ENCODE measurements at regions of chr10 and their contacts with region 1.

Region 1: GRCh38 chr10:62038609-62039190 is 137.2 kb downstream of the ARID5B start:
- H3K4me3 ChIP-seq: no peak overlapping the region
- H3K27ac ChIP-seq: no peak overlapping the region; the same call in 1 of the 2 replicates
- H3K4me1 ChIP-seq: peaks cover 19% of the 10 kb centered on the region
- CTCF ChIP-seq: peak; percentile 56; the same call in 1 of the 2 replicates

Region 2: DNA sequence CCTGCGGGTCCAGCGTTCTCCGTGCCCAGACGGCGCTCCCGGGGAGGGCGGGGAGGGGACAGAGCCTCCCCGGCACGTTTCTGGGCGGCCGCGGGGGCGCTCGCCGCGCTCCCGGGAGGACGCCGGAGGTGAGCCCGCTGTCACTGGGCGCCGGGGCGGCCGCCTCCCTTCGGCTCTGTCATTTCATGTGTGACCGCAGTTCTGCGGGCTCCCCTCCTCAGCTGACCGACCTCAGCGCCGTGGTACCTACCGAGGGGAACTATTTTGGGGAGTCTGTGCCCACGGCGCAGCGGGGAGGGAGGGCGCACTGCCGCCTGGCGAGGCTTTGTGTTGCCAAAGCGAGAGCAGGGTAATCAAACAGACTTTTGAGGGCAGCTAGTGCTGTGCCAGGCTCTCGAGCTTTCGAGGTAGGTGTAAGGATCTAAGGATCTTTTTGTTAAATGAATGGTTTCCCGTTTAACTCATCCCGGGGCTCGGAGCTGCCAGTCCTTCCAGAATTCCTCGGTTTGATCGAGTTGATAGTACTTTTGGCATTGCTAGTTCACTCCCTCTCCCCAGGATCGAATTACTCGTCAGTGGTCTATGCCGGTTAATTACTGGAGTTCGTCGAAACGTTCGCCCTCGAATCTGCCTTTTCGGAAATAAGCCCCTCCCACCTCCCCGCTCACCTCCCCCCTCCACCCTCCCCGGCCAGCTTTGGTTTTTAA is 135.3 kb before region 1 on chr10:
- CTCF ChIA-PET with region 1: interaction called, 35 read pairs
- POLR2A ChIA-PET with region 1: no interaction called
- H3K4me3 ChIP-seq: peak overlapping the region; percentile 53
- H3K27ac ChIP-seq: peak overlapping the region; percentile 99
- H3K4me1 ChIP-seq: peaks cover 6% of the 10 kb centered on the region; the same call in 1 of the 2 replicates
- CTCF ChIP-seq: peak; percentile 91

Region 3: DNA sequence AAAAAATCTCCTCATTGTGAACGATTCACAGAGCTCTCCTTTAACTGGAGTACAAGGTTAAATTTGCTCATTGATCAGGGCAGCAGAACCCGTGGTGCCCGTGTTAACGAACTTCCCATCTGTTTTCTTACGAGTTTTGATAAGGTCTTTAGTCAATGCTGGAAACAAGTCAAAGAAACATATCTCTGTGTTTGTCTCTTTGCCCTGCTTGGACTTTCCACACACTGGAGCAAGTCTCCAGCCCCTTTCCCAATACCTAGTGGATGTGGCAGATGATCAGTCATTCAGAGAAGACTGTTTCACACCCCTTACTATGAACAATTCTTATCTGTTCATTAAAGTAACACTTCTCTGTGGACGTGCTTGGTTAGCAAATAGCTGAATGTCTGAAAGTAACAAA is 15.9 kb before region 1 on chr10:
- CTCF ChIA-PET with region 1: interaction called, 19 read pairs
- POLR2A ChIA-PET with region 1: no interaction called
- H3K4me3 ChIP-seq: no peak overlapping the region
- H3K27ac ChIP-seq: no peak overlapping the region
- H3K4me1 ChIP-seq: peaks cover 34% of the 10 kb centered on the region
- CTCF ChIP-seq: no peak

Region 4: GRCh38 chr10:62050893-62051433 is 12.3 kb after region 1 on chr10:
- CTCF ChIA-PET with region 1: interaction called, 31 read pairs
- POLR2A ChIA-PET with region 1: no interaction called
- H3K4me3 ChIP-seq: peak overlapping the region; percentile 16
- H3K27ac ChIP-seq: no peak overlapping the region
- H3K4me1 ChIP-seq: peaks cover 38% of the 10 kb centered on the region
- CTCF ChIP-seq: no peak

Region 5: DNA sequence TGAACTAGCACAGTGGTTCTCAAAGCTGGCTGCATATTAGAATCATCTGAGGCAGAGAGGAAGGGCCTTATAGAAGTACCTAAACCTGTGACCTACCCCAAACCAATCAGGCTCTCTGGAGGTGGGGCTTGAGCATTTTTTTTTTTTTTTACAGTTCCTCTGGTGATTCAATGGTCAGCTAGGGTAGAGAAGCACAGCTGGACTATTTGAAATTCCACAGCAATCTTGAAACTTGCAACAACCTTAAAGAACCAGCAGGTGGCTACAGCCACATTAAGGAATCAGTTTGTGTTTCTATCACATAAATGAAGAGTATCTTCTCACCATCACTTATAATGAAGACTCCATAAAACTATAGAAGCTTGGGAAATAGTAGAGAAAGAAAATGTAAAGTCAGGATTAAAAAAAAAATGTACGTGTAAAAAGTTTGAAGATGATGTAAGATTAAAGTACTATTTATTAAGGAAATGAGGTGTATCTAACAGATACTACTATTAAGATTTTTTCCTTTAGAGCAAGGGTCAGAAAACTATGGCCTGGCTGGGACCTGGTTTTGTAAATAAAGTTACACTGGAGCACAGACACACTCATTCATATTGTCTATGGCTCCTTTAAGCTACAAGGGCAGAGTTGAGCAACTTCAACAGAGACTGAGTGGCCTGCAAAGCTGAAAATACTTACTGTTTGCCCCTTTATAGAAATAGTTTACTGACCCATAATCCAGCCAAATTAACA is 226.2 kb after region 1 on chr10:
- CTCF ChIA-PET with region 1: interaction called, 13 read pairs
- POLR2A ChIA-PET with region 1: no interaction called
- H3K4me3 ChIP-seq: no peak overlapping the region
- H3K27ac ChIP-seq: no peak overlapping the region
- H3K4me1 ChIP-seq: peaks cover 9% of the 10 kb centered on the region
- CTCF ChIP-seq: 0 out of 2 replicates have a peak, but pooled peaks have one; percentile 27

Measured in HEK293 (cell line).